Ascending aorta (tissue), 2 donors: ENCODE measurements at regions of chr1 and their contacts with region 1.

Region 1: DNA sequence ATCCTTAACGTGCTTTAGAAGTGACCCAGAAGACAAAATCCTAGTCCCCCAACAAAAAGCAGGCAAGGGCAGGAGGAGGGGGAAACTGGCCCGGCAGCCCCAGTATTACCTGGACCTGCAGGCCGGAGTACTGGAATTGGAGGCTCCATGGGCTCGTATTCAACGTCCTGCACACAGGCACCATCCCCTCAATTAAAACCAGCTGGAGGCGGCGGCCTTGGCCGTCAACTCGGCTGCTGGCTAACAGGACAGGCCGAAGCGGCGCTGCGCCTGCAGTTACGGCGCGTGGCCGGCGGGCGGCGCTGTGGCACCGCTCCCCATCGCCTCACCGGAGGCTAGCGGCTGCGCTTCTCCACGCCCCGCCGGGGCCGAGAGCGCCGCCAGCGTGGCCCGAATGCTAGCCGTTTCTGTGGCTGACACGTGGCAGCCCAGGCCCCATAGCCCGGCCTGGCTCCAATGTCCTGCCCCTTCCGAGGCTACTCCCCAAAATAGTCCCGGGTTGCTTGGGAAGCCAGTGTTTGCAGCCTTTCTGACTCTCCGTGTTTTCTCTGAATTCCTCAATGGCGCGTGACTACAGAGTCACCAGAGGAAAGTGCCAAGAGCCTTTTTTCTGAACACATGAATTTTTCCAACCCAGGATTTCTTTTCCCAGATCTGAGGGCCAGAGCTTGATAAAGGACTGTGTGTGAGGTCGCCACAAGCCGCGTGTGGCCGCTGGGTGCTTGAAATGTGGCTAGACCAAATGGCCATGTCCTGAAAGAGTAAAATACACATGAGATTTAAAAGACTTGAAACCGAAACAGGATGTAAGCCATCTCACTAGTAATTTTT is 82.5 kb downstream of the HHIPL2 start:
- DNase-seq: peak; percentile 82 to 98
- H3K4me3 ChIP-seq: peak overlapping the region; percentile 57 to 62
- H3K27ac ChIP-seq: peak overlapping the region; percentile 90 to 93
- H3K4me1 ChIP-seq: peaks cover 0 to 11% of the 10 kb centered on the region in 2 donors
- H3K27me3 ChIP-seq: no peaks in the 10 kb centered on the region
- CTCF ChIP-seq: peak; percentile 96 to 100 (median 99)

Region 2: GRCh38 chr1:222441066-222441465 is 24.4 kb before region 1 on chr1:
- intact Hi-C with region 1: no loop called
- DNase-seq: no peak
- H3K4me3 ChIP-seq: no peak overlapping the region
- H3K27ac ChIP-seq: no peak overlapping the region
- H3K4me1 ChIP-seq: no peaks in the 10 kb centered on the region
- H3K27me3 ChIP-seq: no peaks in the 10 kb centered on the region
- CTCF ChIP-seq: no peak

Region 3: DNA sequence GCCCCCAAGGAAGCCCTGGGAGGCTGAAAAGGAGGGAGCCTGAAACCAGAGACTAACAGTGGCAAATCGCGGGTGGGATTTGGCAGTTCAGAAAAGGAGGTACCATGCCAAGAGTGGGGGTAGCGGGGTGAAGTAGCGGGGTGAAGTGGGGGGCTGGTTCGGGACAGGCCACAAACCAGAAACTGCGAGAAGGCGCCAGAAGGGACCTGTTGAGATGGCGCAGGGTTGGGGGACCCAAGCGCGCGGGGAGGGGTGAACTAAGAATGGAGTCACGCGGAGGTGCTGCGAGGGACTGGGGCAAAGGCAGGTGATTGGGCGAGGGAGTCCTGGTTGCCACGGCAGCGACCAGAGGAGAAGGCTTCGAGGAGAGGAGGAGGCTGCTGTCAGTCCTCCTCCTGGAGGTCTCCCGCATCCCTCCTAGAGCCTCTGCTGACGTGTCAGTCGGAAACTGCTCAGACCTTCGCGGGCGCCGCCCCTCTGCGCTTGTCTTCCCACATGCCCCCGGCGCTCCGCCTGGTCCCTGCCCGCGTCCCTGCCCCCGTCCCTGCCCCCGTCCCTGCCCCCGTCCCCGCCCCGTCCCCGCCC is 152.0 kb after region 1 on chr1:
- intact Hi-C with region 1: loop called (anchors 1 kb)
- DNase-seq: peak; percentile 84 to 97
- H3K4me3 ChIP-seq: peak overlapping the region; percentile 62 to 68
- H3K27ac ChIP-seq: peak overlapping the region; percentile 43 to 78
- H3K4me1 ChIP-seq: no peaks in the 10 kb centered on the region
- H3K27me3 ChIP-seq: no peaks in the 10 kb centered on the region
- CTCF ChIP-seq: no peak

Region 4: GRCh38 chr1:222643938-222644635 is 178.7 kb after region 1 on chr1:
- intact Hi-C with region 1: loop called (anchors 1 kb)
- DNase-seq: peak; percentile 97 to 99
- H3K4me3 ChIP-seq: peak overlapping the region; percentile 83
- H3K27ac ChIP-seq: peak overlapping the region; percentile 89 to 98
- H3K4me1 ChIP-seq: peaks cover 0 to 11% of the 10 kb centered on the region in 2 donors
- H3K27me3 ChIP-seq: no peaks in the 10 kb centered on the region
- CTCF ChIP-seq: no peak

Region 5: GRCh38 chr1:222814536-222815439 is 349.4 kb after region 1 on chr1 and contains the start of gene DISP1:
- intact Hi-C with region 1: loop called (anchors 10 kb)
- DNase-seq: peak in 1 of 2 donors; percentile 91
- H3K4me3 ChIP-seq: peak within 1 kb of the TSS; percentile 61 to 95
- H3K27ac ChIP-seq: peak within 1 kb of the TSS; percentile 91 to 100
- H3K4me1 ChIP-seq: peaks cover 4 to 13% of the 10 kb centered on the region in 2 donors
- H3K27me3 ChIP-seq: no peaks in the 10 kb centered on the region
- CTCF ChIP-seq: no peak
- total RNA-seq, gene DISP1: 23.2 TPM